Natural killer cell (primary cell): ENCODE measurements at regions of chr5 and their contacts with region 1.

Region 1: GRCh38 chr5:31809050-31809870 is 170.3 kb downstream of the PDZD2 start:
- DNase-seq: peak in 1 of 2 donors; percentile 35
- ATAC-seq: peak; percentile 54 to 80 (median 57)
- H3K4me3 ChIP-seq: no peak overlapping the region
- H3K4me3 Mint-ChIP-seq: no peak overlapping the region
- H3K27ac ChIP-seq: no peak overlapping the region
- H3K27ac Mint-ChIP-seq: no peak overlapping the region
- H3K4me1 ChIP-seq: no peaks in the 10 kb centered on the region
- H3K4me1 Mint-ChIP-seq: no peaks in the 10 kb centered on the region
- H3K27me3 ChIP-seq: no peaks in the 10 kb centered on the region
- H3K27me3 Mint-ChIP-seq: no peaks in the 10 kb centered on the region
- CTCF ChIP-seq: peak; percentile 48

Region 2: DNA sequence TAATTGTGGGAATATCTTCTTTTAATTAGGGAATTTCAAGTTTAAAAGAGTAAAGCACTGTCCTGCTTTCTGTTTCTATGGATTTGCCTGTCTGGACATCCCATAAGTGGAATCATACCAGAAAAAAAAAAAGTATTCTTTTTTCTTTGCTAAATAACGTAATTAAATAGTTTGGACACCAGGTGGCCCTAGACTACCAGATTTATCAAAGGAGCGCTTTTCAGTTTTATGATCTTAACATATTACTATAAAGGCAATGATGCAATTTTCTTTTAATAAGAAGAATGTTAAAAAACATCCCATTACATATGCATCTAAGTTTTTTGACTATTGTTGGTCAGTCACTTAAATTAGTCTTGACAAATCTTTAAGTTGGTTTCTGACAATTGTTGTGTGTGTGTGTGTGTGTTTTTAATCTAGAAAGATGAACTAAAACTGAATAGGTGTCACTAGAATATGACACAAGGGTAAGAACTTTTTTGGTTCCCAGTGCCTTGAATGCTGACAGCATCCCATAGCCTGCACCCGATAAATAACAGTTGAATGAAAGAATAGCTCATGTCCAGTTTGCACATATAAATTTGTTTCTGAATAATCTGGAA is 227.7 kb before region 1 on chr5:
- intact Hi-C with region 1: loop called (anchors 1 kb)
- DNase-seq: peak in 1 of 2 donors; percentile 61
- ATAC-seq: peak in 1 of 3 donors; percentile 53
- H3K4me3 ChIP-seq: no peak overlapping the region
- H3K4me3 Mint-ChIP-seq: no peak overlapping the region
- H3K27ac ChIP-seq: no peak overlapping the region
- H3K27ac Mint-ChIP-seq: no peak overlapping the region
- H3K4me1 ChIP-seq: no peaks in the 10 kb centered on the region
- H3K4me1 Mint-ChIP-seq: no peaks in the 10 kb centered on the region
- H3K27me3 ChIP-seq: no peaks in the 10 kb centered on the region
- H3K27me3 Mint-ChIP-seq: peaks cover 13 to 16% of the 10 kb centered on the region in 2 donors
- CTCF ChIP-seq: peak; percentile 73